Right ventricle myocardium inferior (tissue), 1 donor: ENCODE measurements at regions of chr9 and their contacts with region 1.

Region 1: DNA sequence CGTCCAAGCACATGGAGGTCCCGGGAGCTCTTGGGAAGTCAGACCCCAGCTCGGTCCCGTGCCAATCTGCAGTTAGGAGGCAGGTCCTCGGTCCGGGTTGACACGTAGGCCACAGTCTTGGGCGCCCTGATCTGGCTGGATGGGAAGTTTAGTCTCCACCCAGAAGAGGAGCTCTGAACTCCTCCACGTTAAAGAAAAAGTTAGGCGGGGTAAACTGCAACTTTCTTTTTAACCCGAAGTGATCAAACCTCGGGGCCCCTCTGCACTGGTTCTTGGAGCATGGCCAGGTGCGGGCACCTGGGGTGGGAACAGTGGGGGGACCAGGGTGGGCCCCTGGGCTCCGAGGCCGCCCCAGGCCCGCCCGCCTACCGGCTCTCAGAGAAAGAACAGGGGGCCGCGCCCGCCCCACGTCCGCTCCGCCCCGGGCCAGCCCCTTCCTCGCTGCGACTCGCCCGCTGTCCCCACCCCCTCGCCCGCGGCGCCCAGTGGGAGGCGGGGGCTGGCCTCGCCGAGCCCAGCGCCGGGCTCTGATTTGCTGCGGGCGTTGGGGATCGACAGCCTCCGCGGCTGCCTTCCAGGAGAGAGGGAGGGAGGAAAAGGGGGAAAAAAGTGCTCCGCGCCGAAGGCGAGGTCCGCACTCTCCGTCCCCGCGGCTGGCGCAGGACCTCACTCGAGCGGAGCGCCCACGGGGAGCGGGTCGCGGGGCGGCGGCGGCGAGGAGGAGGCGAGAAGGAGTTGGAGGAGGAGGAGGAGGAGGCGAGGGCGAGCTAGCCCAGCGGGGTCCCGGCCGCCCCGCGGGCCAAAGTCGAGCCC is at the start of gene COL5A1:
- DNase-seq: peak; percentile 93
- ATAC-seq: peak; percentile 90
- total RNA-seq, gene COL5A1: 18.7 TPM

Region 2: GRCh38 chr9:134178768-134179551 is 462.4 kb before region 1 on chr9:
- intact Hi-C with region 1: loop called (anchors 10 kb)
- DNase-seq: peak; percentile 85
- ATAC-seq: peak; percentile 65

Region 3: GRCh38 chr9:134391314-134392231 is 249.8 kb before region 1 on chr9:
- intact Hi-C with region 1: no loop called
- DNase-seq: no peak
- ATAC-seq: no peak

Region 4: GRCh38 chr9:134455934-134456739 is 185.2 kb before region 1 on chr9:
- intact Hi-C with region 1: loop called (anchors 5 kb)
- DNase-seq: peak; percentile 93
- ATAC-seq: peak; percentile 83

Region 5: GRCh38 chr9:134689321-134690181 is 48.2 kb after region 1 on chr9:
- intact Hi-C with region 1: loop called (anchors 5 kb)
- DNase-seq: peak; percentile 79
- ATAC-seq: peak; percentile 84

Region 6: DNA sequence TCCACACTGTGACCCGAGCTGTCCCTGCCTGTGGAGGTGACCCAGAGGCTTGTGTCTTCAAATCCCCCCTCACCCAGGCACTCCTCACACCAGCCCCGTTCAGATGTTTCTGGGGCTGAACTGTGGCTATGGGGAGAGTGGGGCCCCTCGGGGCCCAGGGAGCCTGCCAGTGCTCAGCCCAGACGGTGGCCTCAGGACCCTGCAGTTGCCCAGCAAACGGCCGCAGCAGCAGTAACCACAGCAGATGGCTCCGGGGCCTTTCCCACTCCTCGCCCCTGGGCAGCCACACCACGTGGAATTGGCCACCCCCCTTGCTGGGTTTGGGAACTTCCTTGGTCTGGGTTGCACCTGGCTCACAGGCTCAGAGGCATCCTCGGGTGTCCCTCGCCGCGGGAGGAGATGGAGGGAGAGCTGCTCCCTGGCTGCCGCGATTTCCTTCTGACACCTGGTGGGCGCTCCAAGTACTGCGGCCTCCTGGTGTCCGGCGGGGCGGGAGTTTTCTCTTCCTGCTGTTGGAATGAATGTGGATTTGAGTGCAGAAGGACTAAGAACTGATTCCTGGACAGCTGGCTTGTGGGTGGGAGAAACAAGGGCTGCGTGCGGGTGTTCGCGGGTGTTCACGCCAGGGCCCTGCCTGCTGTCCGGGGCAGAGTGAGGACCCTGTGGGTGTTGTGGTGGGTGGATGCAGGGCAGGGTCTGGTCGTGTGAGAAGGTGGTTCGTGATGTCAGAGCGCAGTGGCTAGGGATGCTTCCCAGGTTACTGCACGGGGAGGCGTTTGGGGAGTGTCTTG is 97.7 kb after region 1 on chr9:
- intact Hi-C with region 1: loop called (anchors 5 kb)
- DNase-seq: no peak
- ATAC-seq: peak; percentile 36

Region 7: DNA sequence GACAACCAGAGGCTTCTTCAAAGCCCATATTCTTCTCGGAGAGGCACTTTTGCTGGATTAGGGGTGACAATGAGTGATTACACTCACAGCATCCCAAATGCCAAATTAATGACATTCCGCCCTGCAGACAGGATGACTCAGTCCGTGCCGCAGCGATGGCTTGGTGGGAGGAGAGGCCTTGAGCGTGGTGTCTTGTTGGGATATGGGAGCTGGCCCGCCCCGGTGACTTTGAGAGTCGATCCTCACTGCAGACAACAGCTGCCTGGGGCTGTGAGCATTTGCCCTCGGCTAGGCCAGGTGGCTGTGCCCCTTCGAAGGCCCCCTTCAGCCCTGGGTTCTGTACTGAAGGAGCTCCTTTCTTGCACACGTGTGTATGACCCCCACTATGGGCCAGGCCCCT is 475.9 kb after region 1 on chr9:
- intact Hi-C with region 1: no loop called
- DNase-seq: no peak
- ATAC-seq: no peak